ENCODE measurements at regions of chr7 and their contacts with region 1.

Region 1: DNA sequence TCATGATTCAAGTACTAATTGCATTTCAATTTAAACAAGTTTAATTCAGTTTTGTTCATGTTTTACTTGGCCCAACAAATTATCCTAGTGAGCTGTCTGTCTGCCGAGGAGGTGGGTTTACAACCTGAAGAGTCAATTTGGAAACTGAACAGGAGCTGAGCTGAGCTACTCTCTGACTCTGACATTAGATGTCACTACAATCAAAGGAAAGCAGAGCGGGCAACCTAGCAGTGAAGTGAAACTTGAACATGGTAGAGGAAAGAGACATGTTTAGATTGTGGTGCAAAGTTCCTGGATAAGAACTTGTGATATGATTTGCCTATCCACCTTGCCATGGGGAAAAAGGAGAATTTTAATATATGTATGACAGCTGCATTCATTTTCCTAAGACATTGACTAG is 9.6 kb upstream of the AGR3 start:
- DNase-seq: no peak
- H3K4me3 ChIP-seq: no peak overlapping the region
- CTCF ChIP-seq: peak; percentile 46

Region 2: GRCh38 chr7:16684935-16685334 is 206.4 kb before region 1 on chr7:
- CTCF ChIA-PET with region 1: no interaction called
- POLR2A ChIA-PET with region 1: no interaction called
- DNase-seq: no peak
- H3K4me3 ChIP-seq: no peak overlapping the region
- CTCF ChIP-seq: no peak

Region 3: GRCh38 chr7:16905300-16906044 is 14.1 kb after region 1 on chr7:
- CTCF ChIA-PET with region 1: interaction called, 10 read pairs
- POLR2A ChIA-PET with region 1: no interaction called
- DNase-seq: peak; percentile 41
- H3K4me3 ChIP-seq: no peak overlapping the region
- CTCF ChIP-seq: no peak

Measured in AG04449 (cell line).